Gastrocnemius medialis (tissue), 4 donors: ENCODE measurements at regions of chr1 and their contacts with region 1.

Region 1: DNA sequence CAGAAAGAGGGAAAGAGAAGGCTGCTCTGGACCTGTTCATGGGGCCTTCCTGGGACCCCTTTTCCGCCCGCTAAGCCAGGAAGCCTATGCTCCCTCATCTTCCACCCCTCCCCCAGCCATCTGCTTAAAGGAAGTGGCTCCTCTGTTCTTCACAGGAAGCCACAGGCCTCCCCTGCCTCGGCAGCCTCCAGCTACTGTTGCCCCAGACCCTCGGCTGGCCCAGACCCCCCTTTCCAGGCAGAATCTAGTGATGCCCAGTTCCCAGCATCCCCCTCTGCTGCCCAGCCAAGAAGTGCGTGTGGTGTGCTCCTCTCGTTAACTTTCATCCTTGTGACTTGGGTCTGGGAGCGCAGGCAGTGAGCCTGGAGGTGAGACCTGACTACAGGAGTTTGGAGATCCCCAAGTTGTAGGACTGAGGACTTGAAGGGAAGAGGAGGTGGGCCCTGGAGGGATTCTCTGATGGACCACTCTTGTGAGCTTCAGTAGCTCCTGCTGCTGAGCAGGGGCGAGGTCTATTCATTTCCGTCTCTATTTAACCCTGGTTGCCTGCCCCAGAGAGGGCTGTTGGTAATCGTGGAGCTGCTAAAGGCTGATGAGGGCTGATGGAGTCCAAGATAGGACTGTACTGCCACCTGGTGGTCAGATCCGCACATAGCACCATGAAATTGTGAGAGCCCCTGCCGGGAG is 9.1 kb downstream of the IFI6 start:
- DNase-seq: peak; percentile 53 to 75
- ATAC-seq: peak; percentile 51 to 60
- H3K4me3 ChIP-seq: no peak overlapping the region
- H3K27ac ChIP-seq: peak overlapping the region in 3 of 4 donors; percentile 48 to 74 (median 66)
- H3K4me1 ChIP-seq: peaks cover 0 to 20% of the 10 kb centered on the region in 2 donors
- H3K27me3 ChIP-seq: no peaks in the 10 kb centered on the region
- CTCF ChIP-seq: peak; percentile 91 to 98 (median 94)
- POLR2A ChIP-seq: no peak

Region 2: GRCh38 chr1:27300341-27301051 is 362.4 kb before region 1 on chr1:
- in situ Hi-C with region 1: no loop called
- intact Hi-C with region 1: loop called (anchors 5 kb)
- DNase-seq: peak; percentile 67 to 79
- ATAC-seq: peak; percentile 84 to 92
- H3K4me3 ChIP-seq: no peak overlapping the region
- H3K27ac ChIP-seq: peak overlapping the region in 3 of 4 donors; percentile 41 to 65 (median 65)
- H3K4me1 ChIP-seq: peaks cover 27 to 37% of the 10 kb centered on the region in 2 donors
- H3K27me3 ChIP-seq: no peaks in the 10 kb centered on the region
- CTCF ChIP-seq: peak; percentile 96 to 99 (median 98)
- POLR2A ChIP-seq: no peak

Region 3: GRCh38 chr1:27556781-27557595 is 105.9 kb before region 1 on chr1:
- in situ Hi-C with region 1: no loop called
- intact Hi-C with region 1: loop called (anchors 2 kb)
- DNase-seq: peak; percentile 88 to 95
- ATAC-seq: peak; percentile 81 to 82
- H3K4me3 ChIP-seq: peak overlapping the region; percentile 10 to 38 (median 29)
- H3K27ac ChIP-seq: peak overlapping the region; percentile 95 to 100 (median 98)
- H3K4me1 ChIP-seq: peaks cover 41 to 61% of the 10 kb centered on the region in 2 donors
- H3K27me3 ChIP-seq: no peaks in the 10 kb centered on the region
- CTCF ChIP-seq: peak; percentile 80 to 97 (median 96)
- POLR2A ChIP-seq: peak in 1 of 2 donors; percentile 13

Region 4: DNA sequence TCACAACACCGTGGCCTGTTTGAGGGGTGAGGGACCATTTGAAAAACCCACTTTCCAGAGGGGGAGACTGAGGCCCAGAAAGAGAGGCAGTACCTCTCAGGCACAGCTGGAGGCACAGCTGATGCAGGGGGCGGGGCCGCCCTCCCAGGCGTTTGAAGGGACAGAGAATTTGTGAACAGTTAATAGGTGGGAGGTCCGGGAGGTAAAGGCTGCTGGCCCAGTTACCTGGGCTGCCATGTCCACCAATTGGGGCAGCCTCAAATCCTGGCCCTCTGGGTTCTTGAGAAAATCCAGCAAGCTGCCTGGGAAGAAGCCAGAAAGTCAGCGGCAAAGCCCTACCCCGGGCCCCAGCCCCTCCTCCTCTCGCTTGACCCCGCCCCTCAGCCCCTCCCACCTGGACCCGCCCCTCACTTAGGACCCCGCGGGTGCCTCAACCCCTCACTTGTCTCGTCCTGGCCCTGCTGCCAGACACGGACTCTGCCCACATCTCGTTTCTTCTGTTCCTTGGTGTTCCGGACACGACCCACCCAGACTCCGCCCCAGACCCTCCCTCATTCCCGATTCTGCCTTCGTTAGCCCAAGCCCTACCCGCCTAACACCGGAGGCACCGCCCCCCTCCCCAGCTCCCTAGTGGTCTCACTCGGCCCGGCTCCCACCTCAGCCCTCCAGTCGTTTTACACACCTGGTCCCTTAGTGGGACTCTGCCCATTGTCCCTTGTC is 48.1 kb before region 1 on chr1:
- in situ Hi-C with region 1: loop called (anchors 5 kb)
- intact Hi-C with region 1: no loop called
- DNase-seq: no peak
- ATAC-seq: no peak
- H3K4me3 ChIP-seq: no peak overlapping the region
- H3K27ac ChIP-seq: no peak overlapping the region
- H3K4me1 ChIP-seq: no peaks in the 10 kb centered on the region
- H3K27me3 ChIP-seq: no peaks in the 10 kb centered on the region
- CTCF ChIP-seq: no peak
- POLR2A ChIP-seq: no peak

Region 5: DNA sequence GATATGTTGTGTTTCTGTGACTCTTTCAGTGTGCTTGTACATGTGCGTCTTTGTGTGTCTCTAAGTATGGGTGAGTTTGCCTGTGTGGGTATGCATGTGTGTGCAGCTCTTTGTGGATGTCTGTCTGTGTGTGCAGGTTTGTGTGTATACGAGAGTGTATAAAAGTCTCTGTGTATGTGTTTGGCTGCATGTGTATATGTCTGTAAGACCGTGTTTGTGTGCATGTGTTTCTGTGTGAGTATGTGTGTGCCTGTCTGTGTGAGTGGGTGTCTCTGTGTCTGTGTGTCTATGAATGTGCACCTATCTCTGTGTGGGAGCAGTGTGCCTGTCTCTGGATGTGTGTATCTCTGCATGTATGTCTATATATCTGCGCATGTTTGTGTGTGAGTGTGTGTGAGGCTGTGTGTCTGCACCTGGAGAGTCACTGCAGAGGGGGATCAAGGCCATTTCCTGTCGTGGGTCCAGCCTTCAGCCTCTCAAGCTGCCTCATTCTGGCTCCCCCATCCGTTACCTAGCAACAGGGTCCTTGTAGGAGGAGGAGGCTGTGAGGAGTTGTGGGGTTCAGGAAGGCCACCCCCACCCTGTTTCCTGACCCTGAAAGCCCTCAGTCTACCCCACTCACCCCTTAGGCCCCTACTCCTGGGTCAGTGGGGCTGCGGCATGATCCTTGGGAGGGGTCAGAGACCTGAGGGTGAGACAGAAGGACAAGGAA is 38.2 kb before region 1 on chr1:
- in situ Hi-C with region 1: no loop called
- intact Hi-C with region 1: loop called (anchors 5 kb)
- DNase-seq: no peak
- ATAC-seq: no peak
- H3K4me3 ChIP-seq: no peak overlapping the region
- H3K27ac ChIP-seq: no peak overlapping the region
- H3K4me1 ChIP-seq: peaks cover 11 to 23% of the 10 kb centered on the region in 2 donors
- H3K27me3 ChIP-seq: no peaks in the 10 kb centered on the region
- CTCF ChIP-seq: no peak
- POLR2A ChIP-seq: no peak